GM13976 (cell line): ENCODE measurements at regions of chr2 and their contacts with region 1.

Region 1: DNA sequence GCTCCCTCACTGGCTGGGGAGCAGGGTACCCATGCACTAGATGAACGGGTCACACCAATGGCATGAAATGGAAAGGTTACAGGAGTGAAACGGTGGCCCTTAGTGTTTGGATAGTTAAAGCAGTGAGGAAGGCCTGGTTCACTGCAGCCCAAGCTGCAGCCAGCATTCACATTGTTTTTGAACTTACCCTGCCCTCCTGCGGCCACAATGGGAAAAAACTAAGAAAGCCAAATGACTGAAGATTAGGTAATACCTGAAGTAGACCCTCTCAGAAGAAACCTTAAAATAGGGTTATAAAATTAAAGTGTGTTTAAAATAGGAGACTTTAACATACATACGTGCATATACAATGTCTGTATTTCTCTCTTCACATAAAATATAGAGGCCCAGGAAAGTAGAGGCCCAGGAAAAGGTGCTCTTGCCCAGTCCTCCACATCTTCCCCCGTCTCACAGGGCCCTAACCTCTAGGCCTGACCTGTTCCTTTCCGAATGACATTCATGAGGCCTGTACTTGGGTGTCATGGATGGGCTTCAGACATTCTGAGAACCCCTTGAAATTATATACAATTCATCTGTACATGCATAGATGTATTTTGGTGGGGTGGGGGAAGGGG is 33.3 kb downstream of the DOK1 start:
- DNase-seq: peak; percentile 82
- CTCF ChIP-seq: peak; percentile 72

Region 2: DNA sequence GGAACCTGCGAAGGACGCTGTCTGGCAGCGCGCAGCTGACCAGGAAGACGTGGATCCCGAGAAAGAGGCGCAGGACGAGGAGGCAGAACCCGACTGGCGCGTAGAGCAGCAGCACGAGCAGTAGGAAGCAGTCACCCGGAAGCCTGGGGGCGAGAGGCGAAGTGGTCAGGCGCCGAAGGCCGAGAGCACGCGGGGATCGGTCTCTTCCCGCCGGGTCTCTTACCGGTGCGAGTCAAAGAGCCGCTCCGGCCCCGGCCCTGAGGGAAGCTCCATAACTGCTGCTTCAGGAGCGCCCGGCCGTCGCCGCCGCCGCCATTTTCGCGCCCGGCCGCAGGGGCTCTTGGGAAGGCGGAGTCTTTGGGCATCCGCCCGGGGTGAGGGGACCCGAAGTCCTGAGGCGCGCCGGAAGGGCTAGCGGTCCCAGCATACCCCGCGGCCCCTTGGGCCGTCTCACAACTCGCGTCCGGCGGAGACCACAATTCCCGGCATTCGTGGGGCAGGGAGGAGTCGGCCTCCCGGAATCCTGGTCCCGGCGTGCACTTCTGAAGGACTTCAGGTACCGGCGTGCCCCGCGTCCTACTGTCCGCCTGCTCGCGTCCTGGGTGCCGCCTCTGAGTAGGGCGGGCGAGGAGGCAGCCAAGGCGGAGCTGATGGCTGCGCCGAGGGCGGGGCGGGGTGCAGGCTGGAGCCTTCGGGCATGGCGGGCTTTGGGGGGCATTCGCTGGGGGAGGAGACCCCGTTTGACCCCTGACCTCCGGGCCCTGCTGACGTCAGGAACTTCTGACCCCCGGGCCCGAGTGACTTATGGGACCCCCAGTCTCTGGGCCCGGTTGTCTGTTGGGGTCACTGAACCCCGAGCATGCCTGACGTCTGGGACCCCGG is 58.2 kb before region 1 on chr2 and contains the starts of genes AUP1 and HTRA2:
- in situ Hi-C with region 1: loop called (anchors 10 kb)
- DNase-seq: peak; percentile 99
- CTCF ChIP-seq: no peak

Region 3: GRCh38 chr2:74648009-74648443 is 60.3 kb after region 1 on chr2 and contains the start of gene M1AP:
- in situ Hi-C with region 1: no loop called
- DNase-seq: peak; percentile 51
- CTCF ChIP-seq: peak; percentile 21